Psoas muscle (tissue), 8 donors: ENCODE measurements at regions of chr2 and their contacts with region 1.

Region 1: GRCh38 chr2:65309708-65310107 is 82.1 kb downstream of the ACTR2 start:
- DNase-seq: no peak
- ATAC-seq: peak in 3 of 4 donors; percentile 26 to 45 (median 44)
- H3K4me3 ChIP-seq: no peak overlapping the region
- H3K27ac ChIP-seq: no peak overlapping the region
- H3K4me1 ChIP-seq: no peaks in the 10 kb centered on the region
- H3K27me3 ChIP-seq: no peaks in the 10 kb centered on the region
- CTCF ChIP-seq: no peak

Region 2: DNA sequence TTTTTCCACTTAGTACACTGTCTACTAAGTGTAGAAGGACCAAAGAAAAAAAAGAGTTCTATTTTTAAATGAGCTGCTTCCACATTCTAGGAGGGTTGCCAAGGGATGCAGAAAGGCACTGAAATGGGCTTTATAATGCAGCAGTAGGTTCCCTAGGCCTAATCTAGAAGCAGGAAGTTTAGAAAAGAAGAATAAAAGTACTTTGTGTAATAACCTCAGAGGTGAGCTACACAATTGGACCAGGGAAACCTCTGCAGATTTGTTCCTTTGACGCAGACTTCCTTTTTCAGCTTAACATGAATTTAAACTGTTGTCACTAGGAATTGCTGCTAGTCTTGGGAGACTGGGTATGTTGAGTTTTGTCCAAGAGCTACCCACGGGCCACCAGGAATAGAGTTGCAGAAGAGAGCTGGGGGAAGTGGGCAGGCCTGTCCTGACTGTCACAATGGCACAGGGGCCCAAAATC is 145.2 kb before region 1 on chr2:
- intact Hi-C with region 1: no loop called
- DNase-seq: no peak
- ATAC-seq: peak in 1 of 4 donors; percentile 54
- H3K4me3 ChIP-seq: no peak overlapping the region
- H3K27ac ChIP-seq: peak overlapping the region; percentile 32
- H3K4me1 ChIP-seq: peaks cover 11% of the 10 kb centered on the region
- H3K27me3 ChIP-seq: no peaks in the 10 kb centered on the region
- CTCF ChIP-seq: no peak

Region 3: GRCh38 chr2:65175917-65176527 is 133.7 kb before region 1 on chr2:
- intact Hi-C with region 1: no loop called
- DNase-seq: no peak
- ATAC-seq: peak in 1 of 4 donors; percentile 19
- H3K4me3 ChIP-seq: no peak overlapping the region
- H3K27ac ChIP-seq: no peak overlapping the region
- H3K4me1 ChIP-seq: no peaks in the 10 kb centered on the region
- H3K27me3 ChIP-seq: no peaks in the 10 kb centered on the region
- CTCF ChIP-seq: no peak

Region 4: DNA sequence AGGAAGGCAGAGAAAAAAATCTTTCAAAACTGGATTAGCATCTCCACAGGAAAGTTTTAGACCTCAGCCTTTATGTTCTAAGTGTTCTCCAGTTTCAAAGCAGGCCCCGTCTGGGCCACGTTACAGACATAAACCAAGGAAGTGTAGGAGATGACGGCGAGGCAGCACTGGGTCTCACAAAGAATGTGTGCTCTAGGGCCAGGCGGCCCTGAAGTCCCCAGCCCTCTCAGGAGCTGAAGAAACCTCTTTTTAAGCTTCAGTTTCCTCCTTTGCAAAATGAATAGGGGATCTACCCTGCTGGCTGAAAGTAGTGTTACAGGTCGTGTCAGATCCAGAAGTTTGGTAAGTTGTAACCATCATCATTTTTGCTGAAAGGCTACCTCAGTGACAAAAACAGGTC is 41.0 kb after region 1 on chr2:
- intact Hi-C with region 1: loop called in 1 of 2 experiments (anchors 5 kb)
- DNase-seq: no peak
- ATAC-seq: no peak
- H3K4me3 ChIP-seq: no peak overlapping the region
- H3K27ac ChIP-seq: peak overlapping the region; percentile 23
- H3K4me1 ChIP-seq: peaks cover 19% of the 10 kb centered on the region
- H3K27me3 ChIP-seq: no peaks in the 10 kb centered on the region
- CTCF ChIP-seq: no peak

Region 5: GRCh38 chr2:65846989-65847678 is 537.4 kb after region 1 on chr2:
- intact Hi-C with region 1: no loop called
- DNase-seq: peak; percentile 15 to 63
- ATAC-seq: no peak
- H3K4me3 ChIP-seq: no peak overlapping the region
- H3K27ac ChIP-seq: no peak overlapping the region
- H3K4me1 ChIP-seq: no peaks in the 10 kb centered on the region
- H3K27me3 ChIP-seq: no peaks in the 10 kb centered on the region
- CTCF ChIP-seq: no peak

Region 6: GRCh38 chr2:66122516-66122915 is 812.8 kb after region 1 on chr2:
- intact Hi-C with region 1: no loop called
- DNase-seq: no peak
- ATAC-seq: no peak
- H3K4me3 ChIP-seq: no peak overlapping the region
- H3K27ac ChIP-seq: no peak overlapping the region
- H3K4me1 ChIP-seq: no peaks in the 10 kb centered on the region
- H3K27me3 ChIP-seq: peaks cover 0 to 2% (median 0%) of the 10 kb centered on the region in 3 donors
- CTCF ChIP-seq: no peak